Activated CD4-positive, alpha-beta T cell treated with anti-CD3 and anti-CD28 coated beads, Interleukin-2, amount 10 ng/mL, durations not matched to agents 24 days and 14 days (primary cell): ENCODE measurements at regions of chr19 and their contacts with region 1.

Region 1: GRCh38 chr19:49327878-49328544 is 3.0 kb upstream of the SLC6A16 start:
- DNase-seq: peak; percentile 85
- H3K4me3 Mint-ChIP-seq: no peak overlapping the region
- H3K27ac Mint-ChIP-seq: peak overlapping the region; percentile 70
- H3K4me1 Mint-ChIP-seq: peaks cover 36% of the 10 kb centered on the region
- H3K27me3 Mint-ChIP-seq: no peaks in the 10 kb centered on the region

Region 2: GRCh38 chr19:49271080-49271762 is 56.8 kb before region 1 on chr19:
- intact Hi-C with region 1: loop called (anchors 1 kb)
- DNase-seq: no peak
- H3K4me3 Mint-ChIP-seq: no peak overlapping the region
- H3K27ac Mint-ChIP-seq: no peak overlapping the region
- H3K4me1 Mint-ChIP-seq: peaks cover 3% of the 10 kb centered on the region
- H3K27me3 Mint-ChIP-seq: peaks cover 20% of the 10 kb centered on the region

Region 3: GRCh38 chr19:49301165-49301865 is 26.7 kb before region 1 on chr19:
- intact Hi-C with region 1: loop called (anchors 1 kb)
- DNase-seq: peak; percentile 93
- H3K4me3 Mint-ChIP-seq: no peak overlapping the region
- H3K27ac Mint-ChIP-seq: no peak overlapping the region
- H3K4me1 Mint-ChIP-seq: peaks cover 6% of the 10 kb centered on the region
- H3K27me3 Mint-ChIP-seq: peaks cover 12% of the 10 kb centered on the region

Region 4: GRCh38 chr19:49368711-49369358 is 40.8 kb after region 1 on chr19:
- intact Hi-C with region 1: no loop called
- DNase-seq: no peak
- H3K4me3 Mint-ChIP-seq: no peak overlapping the region
- H3K27ac Mint-ChIP-seq: no peak overlapping the region
- H3K4me1 Mint-ChIP-seq: peaks cover 2% of the 10 kb centered on the region
- H3K27me3 Mint-ChIP-seq: peaks cover 10% of the 10 kb centered on the region